ENCODE measurements at regions of chr9 and their contacts with region 1.

Region 1: DNA sequence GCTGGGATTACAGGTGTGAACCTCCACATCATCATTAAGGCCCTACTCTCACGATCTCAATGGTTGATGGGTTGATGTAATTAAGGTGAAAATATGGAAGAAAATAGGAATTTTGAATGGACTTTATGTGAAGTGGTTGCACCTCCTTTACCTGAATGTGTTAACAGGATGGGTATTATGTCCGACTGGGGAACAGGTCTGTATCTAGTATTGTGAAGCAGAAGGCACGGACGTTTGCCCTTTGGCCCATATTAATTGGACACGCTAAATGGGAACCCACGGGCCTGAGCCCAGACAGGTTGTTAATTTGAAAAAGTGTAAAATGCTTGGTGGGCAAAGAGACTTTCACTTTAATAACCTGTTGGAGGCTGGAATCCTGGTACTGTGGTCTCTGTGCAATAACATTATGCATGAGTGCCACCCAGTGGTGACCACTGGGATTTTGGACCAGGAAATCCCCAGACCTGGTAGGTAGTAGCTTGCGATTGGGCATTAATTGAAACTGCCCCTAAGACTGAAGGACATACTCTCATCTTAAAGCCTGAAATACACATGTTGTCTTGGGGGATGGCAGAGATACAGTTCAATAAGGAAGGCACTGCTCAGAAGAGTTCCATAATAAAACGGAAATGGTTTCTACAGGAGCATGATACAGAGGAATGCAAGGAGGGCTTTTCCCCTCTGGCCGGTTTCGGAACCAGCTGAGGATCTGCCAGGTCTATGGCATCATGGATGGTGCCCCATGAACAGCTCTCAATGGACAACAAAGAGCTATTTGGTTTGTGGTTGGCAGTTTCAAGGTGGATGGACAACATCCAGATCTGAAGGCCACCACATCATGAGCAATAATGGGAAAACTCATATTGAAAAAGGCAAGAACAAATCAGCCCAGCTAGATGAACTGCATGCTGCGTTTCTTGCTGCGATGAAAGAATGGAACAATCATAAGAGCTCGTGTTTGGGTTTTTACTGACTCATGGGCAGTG is 26.2 kb upstream of the BICD2 start:
- DNase-seq: peak; percentile 81
- H3K4me3 Mint-ChIP-seq: no peak overlapping the region
- H3K27ac Mint-ChIP-seq: no peak overlapping the region
- H3K4me1 Mint-ChIP-seq: peaks cover 9% of the 10 kb centered on the region
- H3K27me3 Mint-ChIP-seq: no peaks in the 10 kb centered on the region
- CTCF ChIP-seq: peak; percentile 85

Region 2: GRCh38 chr9:92438900-92439526 is 351.8 kb before region 1 on chr9:
- CTCF ChIA-PET with region 1: interaction called, 3 read pairs
- POLR2A ChIA-PET with region 1: no interaction called
- intact Hi-C with region 1: loop called (anchors 2 kb)
- DNase-seq: peak; percentile 9
- H3K4me3 Mint-ChIP-seq: no peak overlapping the region
- H3K27ac Mint-ChIP-seq: peak overlapping the region; percentile 68
- H3K4me1 Mint-ChIP-seq: peaks cover 7% of the 10 kb centered on the region
- H3K27me3 Mint-ChIP-seq: no peaks in the 10 kb centered on the region
- CTCF ChIP-seq: peak; percentile 50

Region 3: GRCh38 chr9:92626484-92626883 is 164.4 kb before region 1 on chr9:
- CTCF ChIA-PET with region 1: no interaction called
- POLR2A ChIA-PET with region 1: no interaction called
- intact Hi-C with region 1: no loop called
- DNase-seq: no peak
- H3K4me3 Mint-ChIP-seq: no peak overlapping the region
- H3K27ac Mint-ChIP-seq: no peak overlapping the region
- H3K4me1 Mint-ChIP-seq: peaks cover 6% of the 10 kb centered on the region
- H3K27me3 Mint-ChIP-seq: no peaks in the 10 kb centered on the region
- CTCF ChIP-seq: no peak

Region 4: DNA sequence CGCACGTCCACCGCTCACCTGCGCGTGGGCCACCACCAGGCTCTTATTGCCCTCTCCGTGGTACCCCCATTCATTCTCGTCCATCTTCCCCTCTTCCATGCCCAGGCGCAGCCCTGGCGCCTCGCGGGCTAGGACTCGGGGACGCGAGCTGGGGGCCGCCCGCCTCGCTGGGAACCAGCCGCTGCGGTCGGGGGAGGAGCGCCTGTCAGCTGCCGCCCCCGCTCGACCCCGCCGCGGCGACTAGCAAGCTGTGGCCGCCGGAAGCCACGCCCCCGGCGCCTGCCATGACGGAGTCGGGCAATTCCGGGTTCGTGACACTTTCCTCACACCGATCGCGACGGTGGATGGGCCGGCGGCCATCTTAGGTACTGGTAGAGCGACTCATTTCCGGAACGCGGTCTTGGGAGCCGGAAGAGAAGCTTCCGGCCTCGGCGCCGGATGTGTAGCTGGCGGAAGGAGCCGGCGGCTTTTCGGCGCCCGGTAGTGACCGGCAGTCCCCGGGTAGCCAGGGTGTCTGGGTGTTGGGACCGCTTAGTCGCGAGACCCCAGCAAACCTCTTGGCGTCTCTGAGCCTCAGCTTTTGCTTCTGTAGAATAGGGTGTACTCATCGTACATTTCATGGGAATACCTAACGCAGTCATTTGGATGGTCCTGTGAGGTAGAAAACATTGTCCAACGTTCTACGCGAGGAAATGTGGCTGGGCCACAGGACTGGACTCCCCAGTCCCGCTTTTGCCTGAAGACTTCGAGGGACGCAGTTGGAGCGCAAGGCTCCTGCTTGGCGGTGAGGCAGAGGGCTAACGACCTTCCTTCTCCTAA is 120.7 kb before region 1 on chr9 and contains the start of gene IPPK:
- CTCF ChIA-PET with region 1: no interaction called
- POLR2A ChIA-PET with region 1: interaction called, 15 read pairs
- intact Hi-C with region 1: no loop called
- DNase-seq: peak; percentile 99
- H3K4me3 Mint-ChIP-seq: peak within 1 kb of the TSS; percentile 74
- H3K27ac Mint-ChIP-seq: peak within 1 kb of the TSS; percentile 69
- H3K4me1 Mint-ChIP-seq: peaks cover 10% of the 10 kb centered on the region
- H3K27me3 Mint-ChIP-seq: no peaks in the 10 kb centered on the region
- CTCF ChIP-seq: no peak
- total RNA-seq, gene IPPK: 16.3 and 16.6 TPM in 2 replicates

Region 5: DNA sequence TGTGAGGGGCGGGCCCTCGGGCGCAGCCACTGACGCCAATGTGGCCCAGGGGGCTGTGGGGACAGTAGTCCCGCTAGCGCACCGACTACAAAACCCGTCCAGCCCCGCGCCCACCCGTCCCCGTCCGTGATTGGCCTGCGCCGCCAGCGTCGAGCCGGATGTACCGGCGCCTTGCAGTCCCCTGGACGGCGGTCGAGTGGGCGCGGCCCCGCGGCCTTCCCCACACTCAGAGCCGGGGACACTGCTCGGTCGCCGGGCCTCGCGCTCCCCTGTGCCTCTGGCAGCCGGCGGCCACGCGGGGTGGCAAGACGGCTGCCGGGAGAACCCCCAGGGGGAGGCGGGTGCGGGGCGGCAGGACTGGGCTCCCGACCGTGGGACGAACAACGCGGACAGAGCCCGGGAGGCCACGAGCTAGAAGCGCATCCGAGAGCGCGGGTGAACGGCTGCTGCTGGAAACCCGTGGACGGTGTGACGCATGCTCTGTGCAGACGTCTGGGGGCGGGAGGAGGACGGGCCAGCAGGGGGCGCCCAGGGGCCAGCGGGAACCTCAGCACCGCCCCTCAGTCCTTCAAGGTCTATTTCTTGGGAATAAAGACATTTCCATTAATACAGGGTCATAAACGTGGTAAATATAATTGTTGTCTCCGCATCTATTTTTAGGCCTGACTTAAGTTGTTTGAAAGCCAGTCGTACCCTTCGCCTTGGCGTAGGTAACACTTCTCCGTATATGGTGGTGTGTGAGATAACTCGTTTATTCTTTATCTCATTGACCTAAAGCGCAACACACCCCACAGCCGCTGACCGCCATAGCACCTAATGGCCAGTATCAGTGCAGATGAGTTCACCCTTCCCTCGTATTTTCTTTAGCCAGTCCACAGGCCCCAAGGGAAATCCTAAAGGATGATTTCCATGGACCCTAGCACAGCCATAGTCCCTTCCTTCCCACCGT is 25.6 kb before region 1 on chr9:
- CTCF ChIA-PET with region 1: interaction called, 12 read pairs
- POLR2A ChIA-PET with region 1: interaction called, 8 read pairs
- intact Hi-C with region 1: loop called (anchors 1 kb)
- DNase-seq: peak; percentile 97
- H3K4me3 Mint-ChIP-seq: peak overlapping the region; percentile 85
- H3K27ac Mint-ChIP-seq: peak overlapping the region; percentile 29
- H3K4me1 Mint-ChIP-seq: peaks cover 52% of the 10 kb centered on the region
- H3K27me3 Mint-ChIP-seq: no peaks in the 10 kb centered on the region
- CTCF ChIP-seq: peak; percentile 96

Region 6: DNA sequence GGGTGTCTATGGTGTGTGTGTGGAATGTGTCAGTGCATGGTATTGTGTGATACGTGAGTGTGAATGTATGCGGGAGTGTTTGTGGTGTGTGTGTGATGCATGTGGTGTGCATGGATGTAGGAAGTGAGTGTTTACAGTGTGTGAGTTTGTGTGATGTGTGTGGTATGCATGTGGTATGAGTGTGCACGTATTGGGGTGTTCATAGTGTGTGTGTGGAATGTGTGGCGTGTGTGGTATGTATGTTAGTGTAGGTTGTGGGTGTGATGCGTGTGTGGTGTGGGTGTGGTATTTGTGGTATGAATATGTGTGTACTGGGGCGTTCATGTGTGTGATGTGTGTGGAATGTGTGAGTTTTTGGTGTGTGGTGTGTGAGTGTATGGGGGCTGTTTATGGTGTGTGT is 13.9 kb after region 1 on chr9:
- CTCF ChIA-PET with region 1: interaction called, 11 read pairs
- POLR2A ChIA-PET with region 1: interaction called, 3 read pairs
- intact Hi-C with region 1: no loop called
- DNase-seq: no peak
- H3K4me3 Mint-ChIP-seq: no peak overlapping the region
- H3K27ac Mint-ChIP-seq: no peak overlapping the region
- H3K4me1 Mint-ChIP-seq: peaks cover 6% of the 10 kb centered on the region
- H3K27me3 Mint-ChIP-seq: peaks cover 10% of the 10 kb centered on the region
- CTCF ChIP-seq: no peak

Measured in MCF 10A (cell line).